WTC11 (cell line): ENCODE measurements at regions of chr10 and their contacts with region 1.

Region 1: DNA sequence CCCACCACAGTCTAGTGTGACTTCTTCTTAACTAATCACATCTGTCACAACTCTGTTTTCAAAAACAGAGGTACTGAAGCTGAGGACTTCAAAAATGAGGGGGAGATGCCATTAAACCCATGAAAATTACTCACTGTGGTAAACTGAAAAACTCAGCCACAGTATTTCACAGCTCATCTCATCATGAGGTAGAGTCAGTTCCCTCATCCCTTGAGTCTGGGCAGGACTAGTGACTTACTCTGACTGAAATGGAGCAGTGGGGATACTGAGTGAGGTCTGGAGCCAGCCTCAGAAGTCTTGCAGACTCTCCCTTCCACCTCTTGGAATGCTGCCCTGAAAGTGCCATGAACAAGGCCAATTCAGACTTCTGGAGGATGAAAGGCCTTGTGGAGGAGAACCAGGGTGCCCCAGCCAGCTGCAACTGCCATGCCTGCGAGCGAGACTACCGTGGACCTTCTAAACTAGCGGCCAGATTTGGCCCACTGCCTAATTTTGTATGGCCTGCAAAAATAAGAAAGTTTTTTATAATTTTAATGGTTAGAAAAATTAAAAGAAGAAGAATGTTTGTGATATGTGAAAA is 24.7 kb upstream of the ANKRD1 start:
- DNase-seq: no peak
- ATAC-seq: no peak
- H3K4me3 Mint-ChIP-seq: no peak overlapping the region
- H3K27ac Mint-ChIP-seq: no peak overlapping the region
- H3K4me1 Mint-ChIP-seq: no peaks in the 10 kb centered on the region
- H3K27me3 Mint-ChIP-seq: peaks cover 92% of the 10 kb centered on the region
- CTCF ChIP-seq: no peak

Region 2: DNA sequence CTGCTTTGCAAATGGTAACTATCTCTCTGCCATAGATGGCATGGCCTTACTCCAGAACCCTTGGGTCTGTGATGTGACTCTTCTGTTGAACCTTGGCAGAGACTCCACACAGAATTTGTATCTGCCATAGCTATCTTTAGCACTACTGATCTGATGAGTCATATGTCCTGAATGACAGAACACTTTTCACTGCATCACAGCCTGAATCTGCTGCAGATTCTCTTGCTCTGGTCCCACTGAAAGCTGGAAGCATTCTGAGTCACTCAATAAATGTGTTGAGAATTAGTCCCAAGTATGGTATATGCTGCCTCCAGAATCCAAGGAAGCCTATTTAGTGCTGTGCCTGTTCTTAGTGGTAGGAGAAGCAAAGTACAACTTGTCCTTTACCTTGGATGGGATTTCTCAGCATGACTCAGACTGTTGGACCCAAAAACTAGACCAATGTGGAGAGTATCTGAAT is 14.8 kb after region 1 on chr10:
- CTCF ChIA-PET with region 1: no interaction called
- POLR2A ChIA-PET with region 1: no interaction called
- DNase-seq: no peak
- ATAC-seq: no peak
- H3K4me3 Mint-ChIP-seq: no peak overlapping the region
- H3K27ac Mint-ChIP-seq: no peak overlapping the region
- H3K4me1 Mint-ChIP-seq: no peaks in the 10 kb centered on the region
- H3K27me3 Mint-ChIP-seq: peaks cover 74% of the 10 kb centered on the region
- CTCF ChIP-seq: no peak

Region 3: GRCh38 chr10:91022924-91023699 is 77.5 kb after region 1 on chr10:
- CTCF ChIA-PET with region 1: no interaction called
- POLR2A ChIA-PET with region 1: interaction called, 11 read pairs
- DNase-seq: no peak
- ATAC-seq: no peak
- H3K4me3 Mint-ChIP-seq: no peak overlapping the region
- H3K27ac Mint-ChIP-seq: no peak overlapping the region
- H3K4me1 Mint-ChIP-seq: no peaks in the 10 kb centered on the region
- H3K27me3 Mint-ChIP-seq: peaks cover 23% of the 10 kb centered on the region
- CTCF ChIP-seq: no peak